HepG2 (cell line): ENCODE measurements at regions of chr1 and their contacts with region 1.

Region 1: DNA sequence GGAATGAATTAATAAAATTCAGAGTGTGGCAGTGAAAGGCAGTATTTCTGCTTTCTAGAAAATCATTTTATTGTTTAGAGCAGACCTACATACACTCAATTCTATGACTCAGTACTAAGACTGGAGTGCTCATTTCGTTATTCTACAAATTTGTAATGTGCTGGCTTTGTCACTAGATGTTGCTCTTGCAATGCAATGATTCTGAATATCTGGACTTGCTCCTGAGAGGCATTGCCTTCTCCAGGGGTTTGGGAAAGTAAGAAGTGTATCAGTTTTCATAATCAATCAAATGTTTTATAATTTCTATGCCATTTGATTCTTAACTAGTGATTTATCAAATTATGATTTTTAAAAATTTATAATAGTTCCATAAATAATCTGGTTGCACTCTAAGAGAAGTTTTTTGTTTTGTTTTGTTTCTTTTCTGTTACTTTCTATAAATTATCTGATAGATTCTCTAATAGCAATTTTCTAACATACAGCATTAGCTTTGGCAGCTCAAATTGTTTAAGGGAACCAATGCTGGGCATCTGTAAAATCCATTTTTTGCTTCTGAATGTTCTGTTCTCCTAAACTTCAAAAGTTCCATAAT is 280.5 kb upstream of the SGIP1 start:
- DNase-seq: peak; percentile 26
- ATAC-seq: peak; percentile 79
- H3K4me3 ChIP-seq: no peak overlapping the region
- H3K27ac ChIP-seq: no peak overlapping the region
- H3K4me1 ChIP-seq: no peaks in the 10 kb centered on the region
- H3K27me3 ChIP-seq: no peaks in the 10 kb centered on the region; a peak in 1 of 5 replicates
- CTCF ChIP-seq: peak; percentile 72
- EP300 ChIP-seq: no peak
- POLR2A ChIP-seq: no peak
- RAD21 ChIP-seq: no peak

Region 2: DNA sequence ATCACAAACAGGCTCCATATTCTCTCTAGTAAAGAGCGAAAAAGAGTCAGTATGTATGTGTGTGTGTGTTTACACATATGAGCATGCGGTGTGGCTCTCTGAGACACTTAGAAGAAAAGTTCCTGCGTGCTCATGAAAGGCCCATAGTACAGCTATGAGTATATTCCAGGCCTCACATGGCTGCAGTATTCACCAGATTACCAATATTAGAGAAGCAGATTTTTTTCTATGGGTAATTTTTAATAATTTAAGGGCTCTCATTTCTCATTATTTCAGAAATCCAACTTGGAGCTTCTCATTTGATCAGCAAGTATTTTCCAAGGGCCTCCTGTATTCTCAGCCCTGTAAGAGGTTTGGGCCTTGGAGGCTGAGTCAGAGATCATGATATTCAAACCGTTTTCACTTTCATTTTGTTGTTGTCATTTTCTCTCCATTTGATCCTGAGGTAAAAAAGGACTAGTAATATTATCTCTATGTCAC is 47.6 kb after region 1 on chr1:
- CTCF ChIA-PET with region 1: no interaction called
- POLR2A ChIA-PET with region 1: no interaction called
- in situ Hi-C with region 1: no loop called
- intact Hi-C with region 1: no loop called
- DNase-seq: no peak
- ATAC-seq: peak; percentile 48
- H3K4me3 ChIP-seq: peak overlapping the region; percentile 23 to 42 (median 42); a peak in 3 of 6 replicates
- H3K27ac ChIP-seq: no peak overlapping the region
- H3K4me1 ChIP-seq: 0 out of 2 replicates have a peak, but pooled peaks cover 7% of the 10 kb centered on the region
- H3K27me3 ChIP-seq: no peaks in the 10 kb centered on the region
- CTCF ChIP-seq: no peak
- EP300 ChIP-seq: no peak
- POLR2A ChIP-seq: no peak
- RAD21 ChIP-seq: no peak

Region 3: DNA sequence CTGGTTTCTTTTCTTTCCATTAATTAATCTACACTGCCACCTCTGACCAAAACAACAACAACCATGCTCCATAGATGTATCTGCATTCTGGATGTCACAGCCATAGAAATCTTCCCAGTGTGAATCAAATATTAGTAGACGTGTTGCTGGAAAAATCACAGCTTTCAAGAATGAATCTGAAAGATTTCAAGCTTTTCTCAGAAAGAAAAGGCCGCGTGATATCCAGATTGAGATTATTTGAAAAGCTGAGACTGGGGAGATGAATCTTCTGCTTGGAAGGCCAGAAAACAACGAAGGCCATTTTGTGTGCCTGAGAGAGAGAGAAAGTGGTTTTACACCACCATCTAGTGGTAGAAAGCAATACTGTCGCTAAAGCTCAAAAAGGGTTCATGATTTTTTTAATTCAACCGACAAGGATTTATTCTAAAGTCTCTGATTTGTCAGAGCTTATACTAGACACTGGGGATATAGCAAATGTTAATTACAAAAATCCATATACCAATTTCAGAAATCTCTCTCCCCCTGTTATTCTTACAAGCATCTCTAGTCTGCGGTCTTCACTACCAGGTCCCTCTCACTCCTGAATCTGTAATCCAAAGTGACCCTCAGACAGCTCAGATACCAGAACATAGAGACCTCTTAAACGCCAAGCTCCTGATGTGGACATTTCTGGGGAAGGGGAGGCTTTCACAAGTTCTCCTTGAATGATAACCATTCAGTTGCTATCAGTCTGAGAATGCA is 193.0 kb after region 1 on chr1:
- CTCF ChIA-PET with region 1: interaction called, 12 read pairs
- POLR2A ChIA-PET with region 1: no interaction called
- in situ Hi-C with region 1: loop called (anchors 10 kb)
- intact Hi-C with region 1: loop called (anchors 1 kb)
- DNase-seq: peak; percentile 47
- ATAC-seq: peak; percentile 77; the same call in 2 of the 3 replicates
- H3K4me3 ChIP-seq: no peak overlapping the region
- H3K27ac ChIP-seq: no peak overlapping the region
- H3K4me1 ChIP-seq: no peaks in the 10 kb centered on the region
- H3K27me3 ChIP-seq: no peaks in the 10 kb centered on the region
- CTCF ChIP-seq: peak; percentile 78
- EP300 ChIP-seq: no peak
- POLR2A ChIP-seq: no peak
- RAD21 ChIP-seq: no peak

Region 4: GRCh38 chr1:66478116-66478515 is 224.7 kb after region 1 on chr1:
- CTCF ChIA-PET with region 1: no interaction called
- POLR2A ChIA-PET with region 1: no interaction called
- in situ Hi-C with region 1: no loop called
- intact Hi-C with region 1: no loop called
- DNase-seq: no peak
- ATAC-seq: no peak
- H3K4me3 ChIP-seq: no peak overlapping the region
- H3K27ac ChIP-seq: no peak overlapping the region
- H3K4me1 ChIP-seq: no peaks in the 10 kb centered on the region
- H3K27me3 ChIP-seq: no peaks in the 10 kb centered on the region
- CTCF ChIP-seq: no peak
- EP300 ChIP-seq: no peak
- POLR2A ChIP-seq: no peak
- RAD21 ChIP-seq: no peak

Region 5: DNA sequence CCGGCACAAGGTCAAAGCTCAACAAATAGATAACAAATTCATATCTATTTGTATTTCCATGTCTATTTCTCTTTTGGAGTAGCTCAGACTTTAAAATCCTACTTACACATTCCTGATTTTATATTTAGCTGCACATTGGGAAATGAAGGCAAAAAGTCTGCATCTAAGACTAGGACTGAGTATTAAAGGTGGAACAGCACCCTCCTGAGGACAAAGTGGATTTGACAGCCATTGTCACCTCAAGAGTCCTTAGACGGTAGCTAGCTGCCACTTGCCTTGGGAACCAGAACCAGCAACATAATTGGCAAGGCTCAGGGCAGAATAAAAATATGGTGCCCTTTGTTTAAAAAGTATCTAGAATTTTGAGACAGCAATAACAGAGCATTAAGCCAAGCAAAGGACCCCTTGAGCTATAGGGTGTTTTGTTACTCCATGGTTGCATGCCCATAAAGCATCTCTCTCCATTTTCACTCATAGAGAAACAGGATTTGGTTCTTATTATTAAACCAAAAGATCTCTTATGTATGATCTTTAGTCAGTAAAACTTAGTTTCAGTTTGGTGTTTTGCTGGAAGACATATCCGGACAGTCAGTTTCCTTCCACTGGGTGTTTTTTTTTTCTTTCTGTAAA is 250.5 kb after region 1 on chr1:
- CTCF ChIA-PET with region 1: no interaction called
- POLR2A ChIA-PET with region 1: no interaction called
- in situ Hi-C with region 1: no loop called
- intact Hi-C with region 1: loop called (anchors 5 kb)
- DNase-seq: peak; percentile 30
- ATAC-seq: peak; percentile 81
- H3K4me3 ChIP-seq: no peak overlapping the region
- H3K27ac ChIP-seq: no peak overlapping the region
- H3K4me1 ChIP-seq: no peaks in the 10 kb centered on the region
- H3K27me3 ChIP-seq: no peaks in the 10 kb centered on the region
- CTCF ChIP-seq: peak; percentile 69
- EP300 ChIP-seq: no peak
- POLR2A ChIP-seq: no peak
- RAD21 ChIP-seq: 0 out of 2 replicates have a peak, but pooled peaks have one; percentile 25

Region 6: GRCh38 chr1:66732407-66733166 is 479.2 kb after region 1 on chr1:
- CTCF ChIA-PET with region 1: no interaction called
- POLR2A ChIA-PET with region 1: no interaction called
- in situ Hi-C with region 1: no loop called
- intact Hi-C with region 1: loop called (anchors 1 kb)
- DNase-seq: no peak
- ATAC-seq: no peak
- H3K4me3 ChIP-seq: no peak overlapping the region
- H3K27ac ChIP-seq: no peak overlapping the region
- H3K4me1 ChIP-seq: no peaks in the 10 kb centered on the region
- H3K27me3 ChIP-seq: no peaks in the 10 kb centered on the region
- CTCF ChIP-seq: no peak
- EP300 ChIP-seq: no peak
- POLR2A ChIP-seq: no peak
- RAD21 ChIP-seq: no peak